CD14-positive monocyte (primary cell): ENCODE measurements at regions of chr16 and their contacts with region 1.

Region 1: GRCh38 chr16:2777231-2777902 is at the start of gene ELOB:
- DNase-seq: peak; percentile 67 to 79 (median 76)
- H3K4me3 ChIP-seq: peak within 1 kb of the TSS; percentile 94 to 98 (median 97)
- H3K4me3 Mint-ChIP-seq: peak within 1 kb of the TSS; percentile 91 to 97
- H3K27ac ChIP-seq: peak within 1 kb of the TSS; percentile 92 to 99
- H3K27ac Mint-ChIP-seq: peak within 1 kb of the TSS; percentile 93 to 98 (median 96)
- H3K4me1 ChIP-seq: peaks cover 32 to 37% of the 10 kb centered on the region in 2 donors
- H3K4me1 Mint-ChIP-seq: peaks cover 41% of the 10 kb centered on the region
- H3K27me3 ChIP-seq: no peaks in the 10 kb centered on the region
- H3K27me3 Mint-ChIP-seq: peaks cover 0 to 11% (median 5%) of the 10 kb centered on the region in 3 donors
- CTCF ChIP-seq: no peak
- polyA plus RNA-seq, gene ELOB: 150 to 405 (median 363) TPM

Region 2: DNA sequence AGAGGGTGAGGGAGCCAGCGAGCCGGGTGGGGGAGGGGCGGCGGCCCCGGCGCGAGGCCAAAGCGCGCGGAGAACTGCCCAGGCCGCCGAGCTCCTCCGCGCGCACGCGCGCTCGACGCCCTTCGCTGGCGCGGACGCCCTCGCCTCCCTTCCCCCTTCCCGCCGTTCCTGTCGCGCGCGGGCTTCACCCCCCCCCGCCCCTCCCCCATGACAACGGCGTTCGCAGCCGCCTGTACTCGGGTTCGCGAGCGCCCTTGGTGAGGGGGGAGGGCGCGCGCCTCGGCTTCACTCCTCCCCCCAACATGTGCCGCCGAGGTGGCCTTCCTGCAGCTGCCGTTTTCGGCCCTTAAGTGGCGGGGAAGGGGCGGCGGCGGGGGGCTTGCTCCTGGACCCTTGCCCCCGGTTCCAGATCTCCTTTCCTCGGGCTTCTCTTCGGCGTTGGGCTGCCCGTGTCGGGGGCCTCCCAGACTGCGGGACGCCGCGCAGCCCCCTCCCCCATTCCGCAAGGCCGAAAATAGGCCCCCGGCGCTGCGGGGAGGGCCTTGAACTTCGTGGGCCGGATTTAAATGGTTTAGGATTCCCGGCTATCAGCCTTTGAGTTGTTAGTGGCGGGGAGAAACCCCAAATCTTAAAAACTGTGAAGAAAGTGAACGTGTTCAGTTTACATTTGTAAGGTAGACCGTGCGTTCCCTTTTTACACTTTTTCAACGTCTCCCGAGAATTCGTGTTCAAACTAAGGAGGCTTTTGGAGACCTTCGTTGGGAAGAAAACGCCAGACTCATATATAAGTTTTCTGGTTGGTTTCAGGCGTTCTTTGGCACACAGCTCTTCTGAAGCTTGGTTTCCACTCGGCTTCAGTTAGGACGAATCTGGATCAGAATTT is 24.3 kb before region 1 on chr16:
- intact Hi-C with region 1: loop called in 1 of 2 experiments (anchors 1 kb)
- DNase-seq: peak; percentile 72 to 85 (median 79)
- H3K4me3 ChIP-seq: peak overlapping the region; percentile 88 to 97 (median 93)
- H3K4me3 Mint-ChIP-seq: peak overlapping the region; percentile 86 to 95
- H3K27ac ChIP-seq: peak overlapping the region; percentile 88 to 93
- H3K27ac Mint-ChIP-seq: peak overlapping the region; percentile 79 to 99 (median 98)
- H3K4me1 ChIP-seq: peaks cover 31 to 34% of the 10 kb centered on the region in 2 donors
- H3K4me1 Mint-ChIP-seq: peaks cover 41% of the 10 kb centered on the region
- H3K27me3 ChIP-seq: no peaks in the 10 kb centered on the region
- H3K27me3 Mint-ChIP-seq: peaks cover 0 to 3% (median 0%) of the 10 kb centered on the region in 3 donors
- CTCF ChIP-seq: no peak

Region 3: GRCh38 chr16:2764718-2765117 is 12.6 kb before region 1 on chr16:
- intact Hi-C with region 1: no loop called
- DNase-seq: no peak
- H3K4me3 ChIP-seq: no peak overlapping the region
- H3K4me3 Mint-ChIP-seq: no peak overlapping the region
- H3K27ac ChIP-seq: peak overlapping the region in 1 of 2 donors; percentile 15
- H3K27ac Mint-ChIP-seq: peak overlapping the region in 4 of 7 donors; percentile 4 to 73 (median 50)
- H3K4me1 ChIP-seq: no peaks in the 10 kb centered on the region
- H3K4me1 Mint-ChIP-seq: no peaks in the 10 kb centered on the region
- H3K27me3 ChIP-seq: no peaks in the 10 kb centered on the region
- H3K27me3 Mint-ChIP-seq: peaks cover 0 to 4% (median 0%) of the 10 kb centered on the region in 3 donors
- CTCF ChIP-seq: no peak